Pancreas (tissue), 10 donors: ENCODE measurements at regions of chr1 and their contacts with region 1.

Region 1: DNA sequence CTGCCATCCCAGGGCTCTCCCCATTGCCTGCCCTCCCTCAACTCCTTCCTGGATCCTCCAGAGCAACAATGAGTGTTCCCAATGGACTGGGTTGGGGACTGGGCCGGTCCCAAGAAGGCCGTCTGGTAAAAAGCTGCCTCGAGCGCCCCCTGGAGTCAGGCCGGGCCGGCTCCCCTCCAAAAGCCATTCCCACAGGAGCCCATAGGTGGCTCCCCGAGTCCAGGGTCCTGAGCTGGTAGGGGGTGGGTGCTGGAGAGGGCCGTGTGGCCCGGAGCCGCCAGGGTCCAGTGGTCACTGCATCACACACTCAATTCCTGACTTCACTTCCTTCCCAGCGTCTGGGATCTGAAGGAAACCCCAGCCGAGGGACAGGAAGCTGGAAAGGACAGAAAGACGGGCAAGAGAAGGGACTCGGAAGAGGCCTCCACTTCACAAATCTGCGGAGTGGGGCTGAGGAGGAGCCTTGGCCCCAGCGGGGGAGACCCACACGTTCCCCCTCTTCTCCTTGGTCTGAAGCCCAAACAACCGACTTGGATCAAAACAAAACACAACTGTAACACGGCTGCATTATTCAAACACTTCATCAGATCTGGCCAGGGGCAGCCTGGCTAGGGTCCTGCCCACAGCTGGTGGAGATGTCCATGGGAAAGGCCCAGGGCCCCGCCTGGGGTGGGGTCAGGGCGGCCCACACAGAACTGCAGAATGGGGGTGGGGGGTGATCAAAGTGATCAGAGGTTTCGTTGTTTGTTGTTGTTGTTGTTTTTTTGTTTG is 10.9 kb upstream of the ALDH4A1 start:
- DNase-seq: peak; percentile 62 to 92 (median 83)
- ATAC-seq: peak; percentile 73 to 91 (median 88)
- H3K4me3 ChIP-seq: no peak overlapping the region
- H3K27ac ChIP-seq: peak overlapping the region in 1 of 4 donors; percentile 19
- H3K4me1 ChIP-seq: no peaks in the 10 kb centered on the region
- H3K27me3 ChIP-seq: no peaks in the 10 kb centered on the region
- CTCF ChIP-seq: peak; percentile 83 to 97 (median 92)

Region 2: GRCh38 chr1:18949686-18950400 is 36.6 kb after region 1 on chr1:
- intact Hi-C with region 1: loop called in 2 of 3 experiments (anchors 5 to 10 kb)
- DNase-seq: peak in 1 of 6 donors; percentile 21
- ATAC-seq: peak in 3 of 4 donors; percentile 2 to 5 (median 5)
- H3K4me3 ChIP-seq: peak overlapping the region in 2 of 4 donors; percentile 3 to 13
- H3K27ac ChIP-seq: peak overlapping the region; percentile 48 to 78 (median 60)
- H3K4me1 ChIP-seq: peaks cover 29 to 79% (median 31%) of the 10 kb centered on the region in 3 donors
- H3K27me3 ChIP-seq: no peaks in the 10 kb centered on the region
- CTCF ChIP-seq: no peak

Region 3: DNA sequence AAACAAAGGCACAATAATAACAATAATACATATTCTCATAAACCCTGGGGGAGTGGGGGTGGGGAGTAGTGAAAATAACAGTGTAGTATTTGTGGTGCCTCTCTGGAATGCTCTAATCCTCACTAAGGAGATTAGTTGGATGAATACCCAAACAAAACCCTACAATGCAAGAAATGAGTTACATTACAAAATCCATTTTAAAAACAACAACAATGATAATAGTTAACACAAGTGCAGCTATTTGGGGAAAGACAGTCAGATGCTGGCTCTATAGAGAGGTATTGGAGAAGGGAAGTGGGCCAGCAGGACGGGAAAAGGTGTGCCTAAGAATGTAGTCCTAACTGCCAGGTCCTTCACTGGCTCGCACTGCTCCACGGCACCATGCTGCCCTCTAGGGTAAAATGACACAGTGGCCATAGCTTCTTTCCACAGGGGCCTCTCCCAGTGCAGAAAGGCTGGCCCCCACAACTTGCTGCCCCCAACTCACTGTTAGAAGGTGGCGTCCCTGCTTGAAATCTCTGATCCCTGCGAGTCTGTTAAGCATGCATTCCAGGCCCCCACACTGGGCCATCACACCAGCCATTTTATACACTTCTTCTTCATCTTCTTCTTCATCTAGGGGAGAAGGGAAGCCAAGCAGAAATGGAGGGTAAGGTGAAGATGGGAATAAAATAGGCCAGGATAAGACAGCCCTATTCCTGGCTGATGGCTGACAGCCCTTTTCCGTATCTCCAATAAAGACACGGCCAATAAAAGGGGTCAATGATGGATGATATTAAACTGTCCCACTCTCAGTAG is 183.0 kb after region 1 on chr1:
- intact Hi-C with region 1: loop called in 2 of 3 experiments (anchors 5 to 10 kb)
- DNase-seq: peak in 5 of 6 donors; percentile 50 to 73 (median 56)
- ATAC-seq: peak; percentile 67 to 95 (median 90)
- H3K4me3 ChIP-seq: no peak overlapping the region
- H3K27ac ChIP-seq: no peak overlapping the region
- H3K4me1 ChIP-seq: peaks cover 0 to 10% (median 8%) of the 10 kb centered on the region in 3 donors
- H3K27me3 ChIP-seq: no peaks in the 10 kb centered on the region
- CTCF ChIP-seq: peak; percentile 6 to 57 (median 41)